Uterus (tissue), 4 donors: ENCODE measurements at regions of chr1 and their contacts with region 1.

Region 1: DNA sequence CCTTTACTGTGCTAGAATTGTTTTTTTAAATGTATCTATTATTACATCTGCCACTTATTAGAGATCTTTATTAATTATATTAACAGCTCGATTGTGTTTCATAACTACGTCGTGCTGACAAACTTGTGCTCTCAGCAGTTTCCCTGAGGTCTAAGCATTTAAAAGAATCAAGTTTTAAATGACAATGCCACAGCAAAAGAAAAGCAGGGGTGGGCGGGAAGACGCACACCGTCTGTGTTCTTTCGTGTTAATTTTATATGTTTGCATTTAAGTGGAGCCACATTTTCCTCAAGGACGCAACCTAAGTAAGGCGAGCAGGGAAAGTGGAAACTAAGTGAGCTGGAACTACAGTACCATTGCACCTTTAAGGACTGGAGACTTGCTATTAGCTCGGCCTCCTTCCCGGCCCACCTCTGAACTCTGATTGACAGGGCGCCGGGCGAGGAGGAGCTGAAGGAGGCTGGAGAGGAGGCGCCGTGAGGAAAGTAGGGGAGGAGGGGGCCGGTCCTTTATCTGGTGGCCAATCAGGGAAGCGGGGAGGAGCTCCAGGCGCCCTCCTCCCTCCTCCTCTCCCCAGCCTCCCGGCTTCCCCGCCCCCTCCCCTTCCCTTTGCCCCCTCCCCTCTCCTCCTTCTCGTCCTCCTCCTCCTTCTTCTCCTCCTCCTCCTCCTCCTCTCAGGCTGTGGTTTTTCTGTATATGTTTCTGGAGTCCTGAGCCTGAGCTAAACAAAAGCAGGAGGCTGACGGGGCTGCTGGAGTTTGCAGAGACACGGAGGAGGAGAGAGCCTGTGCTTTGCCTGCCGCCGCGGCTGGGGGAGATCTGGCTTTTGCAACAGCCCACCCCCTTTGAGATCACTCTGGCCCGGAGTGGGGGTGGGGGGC is at the start of gene PBX1:
- DNase-seq: peak; percentile 97 to 99
- H3K4me3 ChIP-seq: peak within 1 kb of the TSS; percentile 82 to 88
- H3K27ac ChIP-seq: peak within 1 kb of the TSS; percentile 92 to 97
- H3K4me1 ChIP-seq: no peaks in the 10 kb centered on the region
- H3K27me3 ChIP-seq: no peaks in the 10 kb centered on the region
- CTCF ChIP-seq: peak in 1 of 4 experiments; percentile 8
- POLR2A ChIP-seq: peak; percentile 80 to 85
- total RNA-seq, gene PBX1: 122 to 831 (median 207) TPM

Region 2: DNA sequence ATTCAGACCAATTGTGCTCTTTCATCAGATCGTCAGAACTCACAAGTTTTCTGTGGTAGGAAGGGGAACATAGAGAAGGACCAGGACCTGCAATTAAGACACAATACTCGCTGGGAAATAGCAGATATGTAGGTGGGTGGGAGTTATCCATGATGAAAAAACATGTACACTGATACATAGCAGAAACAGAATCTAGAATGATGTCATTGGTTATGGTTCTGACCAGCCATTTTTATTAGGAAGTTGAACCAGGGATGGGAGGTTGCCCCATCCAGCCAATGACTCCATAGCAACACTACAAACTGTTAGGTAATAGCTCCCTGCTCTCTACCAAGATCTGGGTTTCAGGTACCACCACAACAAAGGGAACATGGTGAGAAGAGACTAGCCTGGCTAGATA is 393.2 kb before region 1 on chr1:
- intact Hi-C with region 1: loop called (anchors 5 kb)
- DNase-seq: no peak
- H3K4me3 ChIP-seq: no peak overlapping the region
- H3K27ac ChIP-seq: no peak overlapping the region
- H3K4me1 ChIP-seq: no peaks in the 10 kb centered on the region
- H3K27me3 ChIP-seq: no peaks in the 10 kb centered on the region
- CTCF ChIP-seq: no peak
- POLR2A ChIP-seq: no peak

Region 3: GRCh38 chr1:164617377-164618201 is 58.9 kb after region 1 on chr1:
- intact Hi-C with region 1: loop called (anchors 10 kb)
- DNase-seq: no peak
- H3K4me3 ChIP-seq: no peak overlapping the region
- H3K27ac ChIP-seq: peak overlapping the region; percentile 75 to 83
- H3K4me1 ChIP-seq: peaks cover 16 to 29% of the 10 kb centered on the region in 2 donors
- H3K27me3 ChIP-seq: no peaks in the 10 kb centered on the region
- CTCF ChIP-seq: peak; percentile 35 to 53 (median 39)
- POLR2A ChIP-seq: no peak

Region 4: DNA sequence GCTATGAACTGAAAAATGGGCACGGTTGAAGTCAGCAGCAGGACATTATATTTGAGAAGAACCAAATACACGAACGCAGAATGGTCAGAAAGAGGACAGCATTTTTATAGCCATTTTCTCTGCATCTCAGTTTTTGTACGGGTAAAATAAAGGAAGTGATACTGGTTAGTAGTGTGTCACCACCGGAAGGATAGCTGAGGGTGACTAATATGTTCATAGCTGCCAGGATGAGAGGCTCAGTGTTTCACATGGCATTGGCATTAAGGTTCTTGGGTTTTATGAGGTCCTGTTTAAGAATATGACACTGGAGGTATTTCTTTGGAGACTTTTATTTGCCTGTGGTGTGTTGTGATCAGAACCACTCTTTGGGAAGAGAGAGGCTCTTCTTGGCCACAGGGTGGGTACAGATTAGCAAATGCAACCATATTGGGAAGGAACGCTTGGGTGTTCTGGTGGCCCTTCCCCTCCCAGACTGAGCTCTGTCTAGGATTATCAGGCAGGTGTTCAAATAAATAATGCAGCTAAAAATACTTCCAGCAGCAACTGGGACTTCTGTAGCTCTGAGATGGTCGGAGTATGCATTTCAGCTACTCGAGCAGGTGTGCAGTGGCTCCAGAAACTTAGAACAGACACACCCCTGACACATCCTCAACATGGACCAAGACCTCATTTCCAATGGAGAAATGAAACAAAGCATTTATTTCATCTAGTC is 158.4 kb after region 1 on chr1:
- intact Hi-C with region 1: no loop called
- DNase-seq: no peak
- H3K4me3 ChIP-seq: no peak overlapping the region
- H3K27ac ChIP-seq: peak overlapping the region; percentile 73 to 85
- H3K4me1 ChIP-seq: peaks cover 3 to 5% of the 10 kb centered on the region in 2 donors
- H3K27me3 ChIP-seq: no peaks in the 10 kb centered on the region
- CTCF ChIP-seq: no peak
- POLR2A ChIP-seq: no peak

Region 5: GRCh38 chr1:164735315-164736052 is 176.8 kb after region 1 on chr1:
- intact Hi-C with region 1: no loop called
- DNase-seq: no peak
- H3K4me3 ChIP-seq: no peak overlapping the region
- H3K27ac ChIP-seq: peak overlapping the region; percentile 40 to 59
- H3K4me1 ChIP-seq: no peaks in the 10 kb centered on the region
- H3K27me3 ChIP-seq: no peaks in the 10 kb centered on the region
- CTCF ChIP-seq: no peak
- POLR2A ChIP-seq: no peak